Activated CD4-positive, alpha-beta T cell treated with anti-CD3 and anti-CD28 coated beads for 36 hours (primary cell): ENCODE measurements at regions of chr6 and their contacts with region 1.

Region 1: GRCh38 chr6:154156135-154156896 is 117.3 kb downstream of the OPRM1 start:
- DNase-seq: peak; percentile 84
- ATAC-seq: peak; percentile 95
- H3K4me3 Mint-ChIP-seq: peak overlapping the region; percentile 64
- H3K27ac Mint-ChIP-seq: peak overlapping the region; percentile 86
- H3K4me1 Mint-ChIP-seq: peaks cover 54% of the 10 kb centered on the region
- H3K27me3 Mint-ChIP-seq: no peaks in the 10 kb centered on the region

Region 2: GRCh38 chr6:154170106-154170505 is 13.8 kb after region 1 on chr6:
- CTCF ChIA-PET with region 1: interaction called, 18 read pairs
- POLR2A ChIA-PET with region 1: no interaction called
- intact Hi-C with region 1: no loop called
- DNase-seq: no peak
- ATAC-seq: no peak
- H3K4me3 Mint-ChIP-seq: no peak overlapping the region
- H3K27ac Mint-ChIP-seq: no peak overlapping the region
- H3K4me1 Mint-ChIP-seq: peaks cover 70% of the 10 kb centered on the region
- H3K27me3 Mint-ChIP-seq: no peaks in the 10 kb centered on the region

Region 3: GRCh38 chr6:154247119-154247861 is 91.0 kb after region 1 on chr6:
- CTCF ChIA-PET with region 1: interaction called, 12 read pairs
- POLR2A ChIA-PET with region 1: no interaction called
- intact Hi-C with region 1: loop called in 1 of 2 experiments (anchors 1 kb)
- DNase-seq: peak; percentile 62
- ATAC-seq: peak; percentile 57
- H3K4me3 Mint-ChIP-seq: peak overlapping the region; percentile 79
- H3K27ac Mint-ChIP-seq: peak overlapping the region; percentile 89
- H3K4me1 Mint-ChIP-seq: peaks cover 80% of the 10 kb centered on the region
- H3K27me3 Mint-ChIP-seq: peaks cover 6% of the 10 kb centered on the region

Region 4: GRCh38 chr6:154352898-154353585 is 196.7 kb after region 1 on chr6:
- CTCF ChIA-PET with region 1: interaction called, 3 read pairs
- POLR2A ChIA-PET with region 1: no interaction called
- intact Hi-C with region 1: loop called (anchors 1 to 5 kb)
- DNase-seq: peak; percentile 78
- ATAC-seq: peak; percentile 85
- H3K4me3 Mint-ChIP-seq: no peak overlapping the region
- H3K27ac Mint-ChIP-seq: no peak overlapping the region
- H3K4me1 Mint-ChIP-seq: peaks cover 29% of the 10 kb centered on the region
- H3K27me3 Mint-ChIP-seq: peaks cover 35% of the 10 kb centered on the region

Region 5: DNA sequence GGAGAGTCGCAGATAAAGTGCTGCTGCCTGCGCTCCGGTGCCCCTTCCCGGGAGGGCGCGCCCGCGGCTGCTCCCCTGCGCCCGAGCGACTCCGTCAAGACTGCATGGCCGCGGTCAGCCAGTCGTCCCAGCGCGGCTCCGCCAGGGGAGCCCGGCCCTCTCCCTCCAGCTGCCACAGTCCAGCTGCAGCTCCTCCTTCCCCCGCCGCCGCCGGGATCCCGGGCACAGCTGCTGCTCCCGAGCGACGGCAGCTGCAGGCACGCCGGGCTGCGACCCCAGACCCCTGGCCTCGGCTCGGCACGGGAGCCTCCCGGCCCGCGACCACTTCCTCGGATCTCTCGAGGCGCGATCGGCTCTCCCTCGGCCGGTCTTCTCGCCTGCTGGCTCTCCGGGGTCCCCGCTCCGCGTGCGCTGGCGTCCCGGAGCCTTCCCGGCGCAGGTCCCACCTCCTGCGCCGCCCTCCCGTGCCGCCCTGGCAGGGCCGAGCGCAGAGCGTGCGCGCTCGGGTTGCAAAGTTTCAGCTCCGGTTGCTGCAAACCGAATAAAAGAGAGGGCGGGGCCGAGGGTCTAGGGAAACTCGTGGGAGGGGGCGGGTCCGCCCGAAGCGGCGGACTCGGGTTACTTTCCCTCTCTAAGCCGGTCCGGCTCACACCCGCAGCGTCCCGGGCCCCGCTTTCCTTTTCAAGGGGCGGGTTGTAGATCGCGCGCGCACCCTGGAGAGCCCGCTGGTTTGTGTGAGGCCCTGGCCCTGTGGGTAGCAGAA is 354.0 kb after region 1 on chr6 and contains the start of gene CNKSR3:
- CTCF ChIA-PET with region 1: no interaction called
- POLR2A ChIA-PET with region 1: no interaction called
- intact Hi-C with region 1: loop called in 1 of 2 experiments (anchors 2 kb)
- DNase-seq: peak; percentile 64
- ATAC-seq: peak; percentile 77
- H3K4me3 Mint-ChIP-seq: peak within 1 kb of the TSS; percentile 68
- H3K27ac Mint-ChIP-seq: no peak within 1 kb of the TSS
- H3K4me1 Mint-ChIP-seq: peaks cover 12% of the 10 kb centered on the region
- H3K27me3 Mint-ChIP-seq: peaks cover 44% of the 10 kb centered on the region
- total RNA-seq, gene CNKSR3: 0.34 to 0.58 TPM

Region 6: GRCh38 chr6:154805288-154805911 is 649.1 kb after region 1 on chr6:
- CTCF ChIA-PET with region 1: no interaction called
- POLR2A ChIA-PET with region 1: no interaction called
- intact Hi-C with region 1: loop called in 1 of 2 experiments (anchors 10 kb)
- DNase-seq: no peak
- ATAC-seq: no peak
- H3K4me3 Mint-ChIP-seq: no peak overlapping the region
- H3K27ac Mint-ChIP-seq: no peak overlapping the region
- H3K4me1 Mint-ChIP-seq: peaks cover 3% of the 10 kb centered on the region
- H3K27me3 Mint-ChIP-seq: no peaks in the 10 kb centered on the region